Common myeloid progenitor, CD34-positive (primary cell): ENCODE measurements at regions of chr3 and their contacts with region 1.

Region 1: GRCh38 chr3:159861369-159861987 is 127.2 kb upstream of the IL12A start:
- DNase-seq: peak in 2 of 3 donors; percentile 65 to 66
- H3K4me3 ChIP-seq: peak overlapping the region in 4 of 7 experiments; percentile 9 to 39 (median 20)
- H3K27ac ChIP-seq: peak overlapping the region in 1 of 2 experiments; percentile 74
- H3K4me1 ChIP-seq: peaks cover 16 to 93% (median 59%) of the 10 kb centered on the region in 4 experiments
- H3K27me3 ChIP-seq: no peaks in the 10 kb centered on the region

Region 2: DNA sequence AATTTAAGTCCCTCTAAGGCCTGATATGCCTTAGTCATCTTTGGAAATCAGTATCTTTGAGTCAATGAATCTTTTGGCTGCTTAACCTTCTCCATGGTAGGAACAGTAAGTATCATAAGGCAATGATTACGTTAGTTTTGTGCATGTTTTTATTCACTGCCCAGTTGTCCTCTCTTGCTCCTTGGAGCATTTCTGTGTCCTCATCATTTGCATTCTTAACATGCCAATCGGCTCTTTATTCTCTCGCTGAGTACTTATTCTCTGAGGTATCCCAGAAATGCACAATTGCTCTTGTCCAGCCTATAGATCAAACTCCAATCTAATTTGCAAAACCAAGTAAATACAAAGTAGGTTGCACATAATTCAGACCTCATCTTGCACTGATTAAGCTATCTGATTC is 277.8 kb before region 1 on chr3:
- CTCF ChIA-PET with region 1: no interaction called
- POLR2A ChIA-PET with region 1: no interaction called
- DNase-seq: no peak
- H3K4me3 ChIP-seq: no peak overlapping the region
- H3K27ac ChIP-seq: no peak overlapping the region
- H3K4me1 ChIP-seq: no peaks in the 10 kb centered on the region
- H3K27me3 ChIP-seq: peaks cover 0 to 7% (median 0%) of the 10 kb centered on the region in 5 experiments

Region 3: DNA sequence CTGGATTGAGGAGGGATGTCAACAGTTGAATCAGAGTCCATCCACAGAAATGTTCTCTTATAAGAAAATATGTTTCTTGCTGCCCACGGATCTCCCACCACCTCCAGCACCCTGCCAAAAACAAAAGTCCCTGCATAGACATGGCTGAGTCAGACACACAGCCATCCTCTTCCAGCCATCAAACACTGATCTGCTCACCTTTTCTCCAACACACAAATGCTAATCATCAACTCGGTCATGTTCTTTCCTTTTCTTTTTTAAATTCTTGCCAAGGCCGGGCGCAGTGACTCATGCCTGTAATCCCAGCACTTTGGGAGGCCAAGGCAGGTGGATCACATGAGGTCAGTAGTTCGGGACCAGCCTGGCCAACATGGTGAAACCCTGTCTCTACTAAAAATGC is 16.4 kb after region 1 on chr3:
- CTCF ChIA-PET with region 1: interaction called, 56 read pairs
- POLR2A ChIA-PET with region 1: no interaction called
- DNase-seq: no peak
- H3K4me3 ChIP-seq: no peak overlapping the region
- H3K27ac ChIP-seq: no peak overlapping the region
- H3K4me1 ChIP-seq: peaks cover under 1 to 35% (median 18%) of the 10 kb centered on the region in 4 experiments
- H3K27me3 ChIP-seq: no peaks in the 10 kb centered on the region